ENCODE measurements at regions of chr6 and their contacts with region 1.

Region 1: GRCh38 chr6:123802697-123803496 is 768 bp upstream of the NKAIN2 start:
- DNase-seq: peak; percentile 91
- H3K4me3 ChIP-seq: peak overlapping the region; percentile 66
- H3K27ac ChIP-seq: peak overlapping the region; percentile 15
- H3K4me1 ChIP-seq: peaks cover 7% of the 10 kb centered on the region
- H3K27me3 ChIP-seq: peaks cover 42% of the 10 kb centered on the region
- CTCF ChIP-seq: peak; percentile 98

Region 2: GRCh38 chr6:123276546-123276980 is 526.3 kb before region 1 on chr6:
- CTCF ChIA-PET with region 1: no interaction called
- POLR2A ChIA-PET with region 1: no interaction called
- intact Hi-C with region 1: no loop called
- DNase-seq: peak; percentile 81
- H3K4me3 ChIP-seq: no peak overlapping the region
- H3K27ac ChIP-seq: no peak overlapping the region
- H3K4me1 ChIP-seq: no peaks in the 10 kb centered on the region
- H3K27me3 ChIP-seq: no peaks in the 10 kb centered on the region
- CTCF ChIP-seq: no peak

Region 3: DNA sequence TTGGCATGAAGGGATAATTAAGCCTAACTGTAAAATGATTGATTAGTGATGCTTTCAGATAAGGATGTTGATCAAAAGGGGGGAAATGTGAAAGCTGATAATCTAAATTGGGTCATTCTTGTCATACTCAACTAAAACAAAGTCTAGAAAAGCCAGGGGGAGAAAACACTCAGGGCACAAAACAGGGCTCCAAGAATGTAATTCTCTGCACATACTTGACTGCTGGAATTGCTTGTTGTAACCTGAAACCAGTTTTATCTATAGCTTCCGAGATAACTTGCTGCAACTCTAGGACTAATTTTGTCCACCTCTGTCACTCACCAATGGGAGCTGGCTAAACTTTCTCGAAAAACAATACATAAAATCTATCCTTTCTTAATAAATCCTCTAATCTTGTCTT is 496.6 kb before region 1 on chr6:
- CTCF ChIA-PET with region 1: no interaction called
- POLR2A ChIA-PET with region 1: no interaction called
- intact Hi-C with region 1: no loop called
- DNase-seq: no peak
- H3K4me3 ChIP-seq: no peak overlapping the region
- H3K27ac ChIP-seq: no peak overlapping the region
- H3K4me1 ChIP-seq: no peaks in the 10 kb centered on the region
- H3K27me3 ChIP-seq: no peaks in the 10 kb centered on the region
- CTCF ChIP-seq: no peak

Region 4: DNA sequence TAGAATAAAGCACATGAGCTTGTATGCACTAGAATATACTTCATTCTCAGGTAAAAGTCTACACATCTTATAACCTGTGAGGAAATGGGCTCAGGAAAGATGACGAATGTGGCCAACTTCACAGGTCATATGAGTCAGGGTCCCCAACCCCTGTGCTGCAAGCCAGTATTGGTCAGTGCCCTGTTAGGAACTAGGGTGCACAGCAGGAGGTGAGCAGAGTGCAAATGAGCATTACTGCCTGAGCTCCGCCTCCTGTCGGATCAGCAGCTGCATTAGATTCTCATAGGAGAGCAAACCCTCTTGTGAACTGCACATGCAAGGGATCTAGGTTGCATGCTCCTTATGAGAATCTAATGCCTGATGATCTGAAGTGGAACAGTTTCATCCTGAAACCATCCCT is 348.4 kb before region 1 on chr6:
- CTCF ChIA-PET with region 1: no interaction called
- POLR2A ChIA-PET with region 1: no interaction called
- intact Hi-C with region 1: no loop called
- DNase-seq: no peak
- H3K4me3 ChIP-seq: no peak overlapping the region
- H3K27ac ChIP-seq: no peak overlapping the region
- H3K4me1 ChIP-seq: no peaks in the 10 kb centered on the region
- H3K27me3 ChIP-seq: no peaks in the 10 kb centered on the region
- CTCF ChIP-seq: no peak

Region 5: GRCh38 chr6:123849406-123849805 is 46.5 kb after region 1 on chr6:
- CTCF ChIA-PET with region 1: no interaction called
- POLR2A ChIA-PET with region 1: no interaction called
- intact Hi-C with region 1: no loop called
- DNase-seq: no peak
- H3K4me3 ChIP-seq: no peak overlapping the region
- H3K27ac ChIP-seq: no peak overlapping the region
- H3K4me1 ChIP-seq: no peaks in the 10 kb centered on the region
- H3K27me3 ChIP-seq: peaks cover 68% of the 10 kb centered on the region
- CTCF ChIP-seq: no peak

Region 6: GRCh38 chr6:124389127-124389526 is 586.2 kb after region 1 on chr6:
- CTCF ChIA-PET with region 1: interaction called, 4 read pairs
- POLR2A ChIA-PET with region 1: no interaction called
- intact Hi-C with region 1: loop called (anchors 10 kb)
- DNase-seq: peak; percentile 35
- H3K4me3 ChIP-seq: no peak overlapping the region
- H3K27ac ChIP-seq: no peak overlapping the region
- H3K4me1 ChIP-seq: no peaks in the 10 kb centered on the region
- H3K27me3 ChIP-seq: no peaks in the 10 kb centered on the region
- CTCF ChIP-seq: peak; percentile 43

Region 7: GRCh38 chr6:124772733-124773319 is 969.9 kb after region 1 on chr6:
- CTCF ChIA-PET with region 1: no interaction called
- POLR2A ChIA-PET with region 1: no interaction called
- intact Hi-C with region 1: loop called (anchors 5 kb)
- DNase-seq: peak; percentile 54
- H3K4me3 ChIP-seq: no peak overlapping the region
- H3K27ac ChIP-seq: peak overlapping the region; percentile 8
- H3K4me1 ChIP-seq: peaks cover 78% of the 10 kb centered on the region
- H3K27me3 ChIP-seq: no peaks in the 10 kb centered on the region
- CTCF ChIP-seq: no peak

Region 8: DNA sequence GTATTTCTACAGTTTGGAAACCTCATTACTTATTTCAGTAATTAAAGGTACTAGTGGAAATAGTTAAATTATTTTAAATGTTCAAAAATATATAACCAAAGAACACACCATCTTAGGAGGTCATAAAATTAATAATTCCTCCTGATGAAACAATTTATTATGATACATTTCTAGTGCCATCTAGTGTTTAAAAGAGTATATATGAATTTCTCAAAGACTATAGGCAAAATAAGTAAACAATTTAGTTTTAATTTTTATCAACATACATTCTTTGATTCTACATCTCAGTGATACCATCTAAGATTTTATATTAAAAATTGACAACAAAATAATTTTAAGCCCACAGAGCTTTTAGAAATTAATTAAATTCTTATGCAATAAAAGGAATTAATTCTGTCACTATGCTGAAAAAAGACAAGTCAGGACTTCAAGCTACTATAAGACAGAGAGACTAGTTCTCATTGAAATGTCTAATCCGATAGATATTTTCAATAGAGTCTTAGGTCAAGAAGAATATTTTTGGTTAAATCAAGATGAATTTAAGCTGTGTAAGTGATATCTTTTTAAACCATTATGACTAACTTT is 1051.5 kb after region 1 on chr6:
- CTCF ChIA-PET with region 1: interaction called, 3 read pairs
- POLR2A ChIA-PET with region 1: no interaction called
- intact Hi-C with region 1: loop called (anchors 10 kb)
- DNase-seq: peak; percentile 38
- H3K4me3 ChIP-seq: no peak overlapping the region
- H3K27ac ChIP-seq: no peak overlapping the region
- H3K4me1 ChIP-seq: peaks cover 14% of the 10 kb centered on the region
- H3K27me3 ChIP-seq: no peaks in the 10 kb centered on the region
- CTCF ChIP-seq: peak; percentile 62; the same call in 1 of the 2 replicates

Measured in A673 (cell line).